ENCODE measurements at regions of chr2 and their contacts with region 1.

Region 1: GRCh38 chr2:177164584-177165052 is 48.0 kb upstream of the HNRNPA3 start:
- DNase-seq: peak; percentile 85
- H3K4me3 ChIP-seq: peak overlapping the region; percentile 64
- H3K27ac ChIP-seq: peak overlapping the region; percentile 71
- H3K4me1 ChIP-seq: peaks cover 24% of the 10 kb centered on the region
- CTCF ChIP-seq: peak; percentile 100

Region 2: DNA sequence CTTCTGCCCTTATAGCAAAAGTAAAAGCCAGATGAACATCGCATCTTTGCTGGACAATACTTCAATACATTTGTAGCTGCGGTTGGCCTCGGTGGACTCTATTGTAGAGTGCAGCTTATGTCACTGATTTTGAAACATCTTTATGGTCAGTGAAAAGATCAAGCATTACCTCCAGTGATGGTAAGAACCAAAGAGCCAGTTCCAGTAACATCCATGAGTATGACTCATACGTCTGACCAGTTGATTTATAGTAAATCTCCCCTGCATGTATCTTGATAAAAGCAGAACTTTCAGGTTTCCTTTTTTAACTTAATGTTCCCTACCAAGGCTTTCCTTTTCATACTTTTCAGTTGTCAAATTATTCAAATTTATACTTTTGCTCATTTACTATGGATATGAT is 71.2 kb before region 1 on chr2:
- CTCF ChIA-PET with region 1: no interaction called
- POLR2A ChIA-PET with region 1: no interaction called
- intact Hi-C with region 1: no loop called
- DNase-seq: no peak
- H3K4me3 ChIP-seq: no peak overlapping the region
- H3K27ac ChIP-seq: no peak overlapping the region
- H3K4me1 ChIP-seq: no peaks in the 10 kb centered on the region
- CTCF ChIP-seq: no peak

Region 3: DNA sequence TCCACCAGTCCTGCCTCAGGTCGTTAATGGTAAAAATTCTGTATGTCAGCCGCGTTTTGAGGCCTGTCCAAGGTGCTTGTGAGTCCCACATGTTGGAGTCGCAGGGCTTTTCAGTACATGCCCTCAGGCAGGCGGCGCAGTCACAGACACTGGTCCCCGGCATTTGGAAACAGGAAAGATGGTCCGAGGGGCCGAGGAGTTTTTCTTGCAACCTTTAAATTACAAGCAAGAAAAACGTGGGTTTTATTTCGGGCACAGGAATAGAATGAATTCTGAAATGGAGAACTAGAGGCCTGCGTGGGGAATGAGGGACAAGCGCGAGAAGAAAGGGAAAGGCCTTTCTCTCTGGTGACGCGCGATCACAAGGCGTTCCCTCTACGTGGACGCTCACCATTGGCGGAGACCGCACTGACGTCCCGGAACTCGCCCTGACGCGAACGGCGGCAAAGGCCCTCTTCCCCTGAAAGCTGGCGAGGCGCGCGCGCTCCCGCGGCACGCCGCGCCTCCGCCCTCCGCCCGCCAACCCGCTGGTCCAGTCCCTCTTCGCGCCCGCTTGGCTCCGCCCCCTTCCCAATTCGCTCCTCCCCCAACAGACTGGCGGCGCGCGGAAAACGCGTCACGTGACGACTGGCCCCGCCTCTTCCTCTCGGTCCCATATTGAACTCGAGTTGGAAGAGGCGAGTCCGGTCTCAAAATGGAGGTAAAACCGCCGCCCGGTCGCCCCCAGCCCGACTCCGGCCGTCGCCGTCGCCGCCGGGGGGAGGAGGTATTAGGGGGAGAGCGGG is 47.7 kb after region 1 on chr2 and contains the start of gene HNRNPA3:
- CTCF ChIA-PET with region 1: interaction called, 5 read pairs
- POLR2A ChIA-PET with region 1: interaction called, 6 read pairs
- intact Hi-C with region 1: loop called (anchors 1 kb)
- DNase-seq: peak; percentile 98
- H3K4me3 ChIP-seq: peak within 1 kb of the TSS; percentile 81
- H3K27ac ChIP-seq: peak within 1 kb of the TSS; percentile 87
- H3K4me1 ChIP-seq: peaks cover 35% of the 10 kb centered on the region
- CTCF ChIP-seq: peak; percentile 47; the same call in 1 of the 2 replicates
- total RNA-seq, gene HNRNPA3: 68.2 and 82.2 TPM in 2 replicates

Region 4: DNA sequence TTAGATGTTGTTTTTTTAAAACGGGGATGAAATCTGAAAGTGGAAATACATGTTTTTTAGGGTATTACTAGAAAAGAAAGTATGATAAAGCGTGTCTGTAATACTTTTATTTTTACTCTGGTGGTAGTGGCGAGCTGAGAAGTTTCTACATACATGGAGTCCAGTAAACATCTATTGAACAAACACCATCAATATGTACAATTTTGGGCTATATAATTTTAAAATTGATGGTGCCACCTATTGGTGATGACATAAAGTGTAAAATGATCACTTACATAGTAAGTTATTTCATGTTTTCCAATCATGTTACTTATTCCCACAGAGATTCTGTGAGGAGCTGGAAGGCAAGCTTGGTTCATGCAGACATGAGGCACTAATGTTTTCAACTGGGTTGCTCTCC is 131.4 kb after region 1 on chr2:
- CTCF ChIA-PET with region 1: no interaction called
- POLR2A ChIA-PET with region 1: interaction called, 3 read pairs
- intact Hi-C with region 1: loop called (anchors 1 kb)
- DNase-seq: peak; percentile 47
- H3K4me3 ChIP-seq: no peak overlapping the region
- H3K27ac ChIP-seq: no peak overlapping the region
- H3K4me1 ChIP-seq: peaks cover 5% of the 10 kb centered on the region
- CTCF ChIP-seq: peak; percentile 80

Region 5: GRCh38 chr2:177419274-177419673 is 254.7 kb after region 1 on chr2:
- CTCF ChIA-PET with region 1: interaction called, 4 read pairs
- POLR2A ChIA-PET with region 1: interaction called, 4 read pairs
- intact Hi-C with region 1: loop called (anchors 2 kb)
- DNase-seq: no peak
- H3K4me3 ChIP-seq: no peak overlapping the region
- H3K27ac ChIP-seq: no peak overlapping the region
- H3K4me1 ChIP-seq: no peaks in the 10 kb centered on the region
- CTCF ChIP-seq: no peak

Region 6: GRCh38 chr2:177763532-177764265 is 599.1 kb after region 1 on chr2:
- CTCF ChIA-PET with region 1: interaction called, 3 read pairs
- POLR2A ChIA-PET with region 1: no interaction called
- intact Hi-C with region 1: loop called (anchors 2 kb)
- DNase-seq: peak; percentile 61
- H3K4me3 ChIP-seq: no peak overlapping the region
- H3K27ac ChIP-seq: no peak overlapping the region
- H3K4me1 ChIP-seq: no peaks in the 10 kb centered on the region
- CTCF ChIP-seq: peak; percentile 84

Measured in OCI-LY7 (cell line).